ENCODE measurements at regions of chr14 and their contacts with region 1.

Region 1: DNA sequence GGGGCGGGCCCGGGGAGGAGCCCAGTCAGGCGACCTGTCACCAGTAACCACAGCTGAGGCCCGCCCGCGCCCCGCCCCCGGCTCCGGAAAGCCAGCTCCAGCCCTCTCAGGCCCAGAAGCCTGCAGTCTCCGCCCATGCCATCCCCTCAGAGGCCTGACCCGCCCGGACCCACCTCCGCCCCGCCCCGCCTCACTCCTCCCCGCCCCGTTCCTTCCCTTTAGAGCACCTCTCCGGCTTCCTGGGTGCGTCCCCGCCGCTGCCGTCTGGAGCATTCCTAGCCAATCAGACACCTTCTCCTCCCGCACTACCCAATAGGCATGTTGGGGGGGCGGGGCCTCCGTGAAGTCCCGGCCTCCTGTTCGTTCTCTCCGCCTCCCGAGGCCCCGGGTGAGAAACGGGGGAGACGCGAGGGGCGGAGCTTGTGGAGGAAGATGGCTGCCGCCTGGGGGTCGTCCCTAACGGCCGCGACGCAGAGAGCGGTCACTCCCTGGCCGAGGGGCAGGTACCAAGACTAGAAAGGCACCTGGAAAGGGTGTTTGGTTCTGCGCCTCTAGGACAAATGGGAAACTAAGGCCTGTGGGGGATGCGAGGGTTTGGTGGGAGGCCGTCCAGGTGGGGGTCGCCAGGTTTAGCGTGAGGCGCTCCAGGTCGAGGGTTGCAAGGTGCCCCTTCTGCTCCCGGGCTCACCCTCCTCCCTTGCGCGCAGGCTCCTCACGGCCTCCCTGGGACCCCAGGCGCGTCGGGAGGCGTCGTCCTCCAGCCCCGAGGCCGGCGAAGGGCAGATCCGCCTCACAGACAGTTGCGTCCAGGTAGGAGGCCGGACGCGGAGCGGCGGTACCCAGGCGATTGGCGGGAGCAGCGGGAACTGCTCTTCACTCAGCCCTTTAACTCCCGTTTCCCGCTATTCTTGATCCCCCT is at the start of gene ISCA2:
- DNase-seq: peak; percentile 100
- H3K4me3 ChIP-seq: peak within 1 kb of the TSS; percentile 72 to 99 (median 88)
- H3K27ac ChIP-seq: peak within 1 kb of the TSS; percentile 93 to 97 (median 94)
- H3K4me1 ChIP-seq: peaks cover 8 to 27% (median 17%) of the 10 kb centered on the region in 4 donors
- H3K27me3 ChIP-seq: no peaks in the 10 kb centered on the region
- CTCF ChIP-seq: peak in 2 of 5 experiments; percentile 14 to 16
- EP300 ChIP-seq: no peak
- POLR2A ChIP-seq: no peak
- total RNA-seq, gene ISCA2: 4.1 to 32.4 (median 20.6) TPM

Region 2: DNA sequence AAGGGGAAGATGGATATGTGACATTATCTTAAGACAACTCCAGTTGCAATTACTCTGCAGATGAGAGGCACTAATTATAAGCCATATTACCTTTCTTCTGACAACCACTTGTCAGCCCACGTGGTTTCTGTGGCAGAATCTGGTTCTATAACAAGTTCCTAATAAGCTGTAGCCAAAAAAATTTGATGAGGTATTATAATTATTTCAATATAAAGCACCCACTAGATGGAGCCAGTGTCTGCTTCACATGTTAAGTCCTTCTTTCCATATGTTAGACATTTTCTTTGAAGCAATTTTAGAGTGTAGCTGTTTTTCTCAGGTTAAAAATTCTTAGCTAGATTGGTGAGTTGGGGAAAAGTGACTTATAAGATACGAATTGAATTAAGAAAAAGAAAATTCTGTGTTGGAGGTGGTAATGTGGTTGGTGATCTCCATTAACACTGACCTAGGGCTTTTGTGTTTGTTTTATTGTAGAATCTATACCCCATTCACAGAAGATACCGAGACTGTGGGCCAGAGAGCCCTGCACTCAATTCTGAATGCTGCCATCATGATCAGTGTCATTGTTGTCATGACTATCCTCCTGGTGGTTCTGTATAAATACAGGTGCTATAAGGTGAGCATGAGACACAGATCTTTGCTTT is 1320.4 kb before region 1 on chr14:
- in situ Hi-C with region 1: no loop called
- intact Hi-C with region 1: loop called (anchors 5 kb)
- DNase-seq: no peak
- H3K4me3 ChIP-seq: no peak overlapping the region
- H3K27ac ChIP-seq: no peak overlapping the region
- H3K4me1 ChIP-seq: peaks cover 0 to under 1% (median 0%) of the 10 kb centered on the region in 4 donors
- H3K27me3 ChIP-seq: no peaks in the 10 kb centered on the region
- CTCF ChIP-seq: peak in 3 of 5 experiments; percentile 11 to 33 (median 31)
- EP300 ChIP-seq: no peak
- POLR2A ChIP-seq: no peak

Region 3: GRCh38 chr14:73924337-73924736 is 569.3 kb before region 1 on chr14:
- in situ Hi-C with region 1: no loop called
- intact Hi-C with region 1: loop called (anchors 5 kb)
- DNase-seq: no peak
- H3K4me3 ChIP-seq: no peak overlapping the region
- H3K27ac ChIP-seq: no peak overlapping the region
- H3K4me1 ChIP-seq: no peaks in the 10 kb centered on the region
- H3K27me3 ChIP-seq: no peaks in the 10 kb centered on the region
- CTCF ChIP-seq: no peak
- EP300 ChIP-seq: no peak
- POLR2A ChIP-seq: no peak

Region 4: DNA sequence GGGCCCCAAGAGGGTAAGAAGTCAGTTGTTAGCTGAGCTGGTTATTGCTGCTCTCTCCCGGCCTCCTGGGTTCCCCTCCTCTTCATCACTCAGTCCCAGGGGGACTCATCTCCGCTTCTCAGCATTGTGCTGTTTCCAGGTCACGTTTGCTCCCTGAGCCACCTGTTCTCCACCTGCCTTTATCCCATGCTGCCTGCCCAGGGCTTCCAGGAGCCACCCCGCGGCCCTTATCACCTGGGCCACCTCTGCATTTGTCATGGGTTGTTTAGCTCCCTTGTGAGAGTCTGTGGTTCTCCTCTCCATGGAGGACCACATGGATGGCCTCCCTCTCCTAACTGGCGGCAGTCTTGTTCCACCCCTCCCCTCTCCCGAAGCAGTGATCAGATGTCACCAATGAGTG is 103.6 kb before region 1 on chr14:
- in situ Hi-C with region 1: no loop called
- intact Hi-C with region 1: no loop called
- DNase-seq: no peak
- H3K4me3 ChIP-seq: no peak overlapping the region
- H3K27ac ChIP-seq: no peak overlapping the region
- H3K4me1 ChIP-seq: no peaks in the 10 kb centered on the region
- H3K27me3 ChIP-seq: peaks cover 23% of the 10 kb centered on the region
- CTCF ChIP-seq: no peak
- EP300 ChIP-seq: no peak
- POLR2A ChIP-seq: no peak